Transverse colon (tissue), 4 donors: ENCODE measurements at regions of chr7 and their contacts with region 1.

Region 1: DNA sequence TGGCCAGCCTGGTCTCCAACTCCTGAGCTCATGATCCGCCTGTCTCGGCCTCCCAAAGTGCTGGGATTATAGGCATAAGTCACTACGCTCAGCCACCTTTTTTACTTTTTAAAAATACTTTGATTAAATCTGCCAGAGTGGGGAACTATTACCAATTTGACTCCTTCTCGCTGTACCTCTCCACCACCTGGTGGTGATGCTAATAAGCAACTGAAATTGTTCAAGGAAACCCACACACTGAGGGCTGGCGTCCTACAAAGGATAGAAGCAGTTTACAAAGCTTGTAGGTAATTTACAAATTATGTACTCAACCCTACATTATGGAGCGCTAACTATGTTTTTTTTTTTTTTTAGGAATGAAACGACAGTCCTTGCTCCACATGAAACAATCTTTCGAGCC is 111.1 kb downstream of the CPED1 start:
- DNase-seq: no peak
- H3K4me3 ChIP-seq: no peak overlapping the region
- H3K27ac ChIP-seq: no peak overlapping the region
- H3K4me1 ChIP-seq: no peaks in the 10 kb centered on the region
- H3K27me3 ChIP-seq: no peaks in the 10 kb centered on the region
- CTCF ChIP-seq: no peak
- EP300 ChIP-seq: no peak
- POLR2A ChIP-seq: no peak

Region 2: DNA sequence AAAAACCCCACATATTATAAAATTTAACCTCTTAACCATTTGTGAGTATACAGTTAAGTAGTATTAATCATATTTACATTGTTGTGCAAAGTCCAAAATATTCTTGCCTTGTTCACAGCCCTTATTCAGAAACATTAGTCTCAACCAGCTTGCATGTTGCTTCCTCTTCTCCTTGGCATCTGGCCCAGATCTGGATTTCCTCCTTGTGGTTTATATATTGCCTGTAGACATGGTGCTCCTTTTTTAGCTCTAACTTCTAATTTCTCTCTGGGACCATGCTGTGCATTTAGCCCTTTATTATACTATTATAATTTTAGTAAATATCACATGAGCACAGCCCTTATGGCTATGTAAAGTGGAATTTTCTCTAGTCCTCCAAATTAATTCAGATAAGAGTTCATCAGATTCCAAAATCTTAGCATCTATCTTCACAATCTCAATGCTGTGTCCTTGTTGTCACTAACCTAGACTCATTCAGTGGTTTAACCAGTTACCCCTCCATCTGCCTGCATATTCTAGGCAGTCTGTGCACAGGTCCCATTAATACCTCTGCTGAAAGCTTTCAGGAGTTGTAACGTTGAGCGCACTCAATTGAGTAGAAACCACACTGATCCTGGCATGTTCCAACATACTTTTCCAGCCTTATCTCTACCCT is 103.1 kb before region 1 on chr7:
- in situ Hi-C with region 1: loop called in 2 of 4 experiments (anchors 10 to 25 kb)
- intact Hi-C with region 1: no loop called
- DNase-seq: peak; percentile 78
- H3K4me3 ChIP-seq: no peak overlapping the region
- H3K27ac ChIP-seq: peak overlapping the region; percentile 54 to 89 (median 61)
- H3K4me1 ChIP-seq: peaks cover 0 to 61% (median 17%) of the 10 kb centered on the region in 4 donors
- H3K27me3 ChIP-seq: no peaks in the 10 kb centered on the region
- CTCF ChIP-seq: no peak
- EP300 ChIP-seq: no peak
- POLR2A ChIP-seq: no peak